ENCODE measurements at regions of chr16 and their contacts with region 1.

Region 1: DNA sequence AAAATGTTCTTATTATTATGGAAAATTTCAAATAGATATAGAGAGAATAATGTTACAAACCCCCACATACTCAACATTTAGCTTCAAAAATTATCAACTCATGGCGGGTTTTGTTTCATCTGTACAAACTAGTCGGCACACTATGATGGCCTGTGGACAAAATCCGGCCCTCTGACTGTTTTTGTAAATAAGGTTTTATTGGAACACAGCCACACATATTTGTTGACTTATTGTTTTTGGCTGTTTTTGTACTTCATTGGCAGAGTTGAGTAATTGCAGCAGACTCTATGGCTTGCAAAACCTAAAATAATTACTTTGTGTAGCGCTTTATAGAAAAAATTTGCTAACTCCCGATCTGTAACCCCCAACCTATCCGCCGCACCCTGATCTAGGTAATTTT is 41.4 kb upstream of the CLEC18A start:
- DNase-seq: no peak
- H3K4me3 ChIP-seq: no peak overlapping the region
- H3K27ac ChIP-seq: no peak overlapping the region
- H3K4me1 ChIP-seq: peaks cover 3% of the 10 kb centered on the region
- H3K27me3 ChIP-seq: no peaks in the 10 kb centered on the region
- CTCF ChIP-seq: no peak

Region 2: DNA sequence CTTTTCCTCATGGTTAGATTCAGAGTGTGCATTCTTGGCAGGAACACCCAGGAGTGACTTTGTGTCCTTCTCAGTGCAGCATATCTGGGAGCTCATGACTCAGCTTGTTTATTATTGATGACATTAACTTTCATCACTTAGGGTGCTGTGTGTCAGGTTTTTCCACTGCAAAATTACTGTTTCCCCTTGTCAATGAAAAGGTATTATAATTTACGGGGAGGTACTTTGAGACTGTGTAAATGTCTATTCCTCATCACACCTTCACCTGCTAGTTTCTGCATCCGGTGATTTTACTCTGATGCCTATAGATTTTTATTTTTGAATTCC is 97.1 kb before region 1 on chr16:
- CTCF ChIA-PET with region 1: no interaction called
- dilution Hi-C with region 1: no loop called
- in situ Hi-C with region 1: no loop called
- intact Hi-C with region 1: no loop called
- DNase-seq: no peak
- H3K4me3 ChIP-seq: no peak overlapping the region
- H3K27ac ChIP-seq: no peak overlapping the region
- H3K4me1 ChIP-seq: no peaks in the 10 kb centered on the region
- H3K27me3 ChIP-seq: no peaks in the 10 kb centered on the region
- CTCF ChIP-seq: no peak

Region 3: GRCh38 chr16:69833357-69834282 is 76.1 kb before region 1 on chr16:
- CTCF ChIA-PET with region 1: no interaction called
- dilution Hi-C with region 1: loop called (anchors 5 kb)
- in situ Hi-C with region 1: no loop called
- intact Hi-C with region 1: no loop called
- DNase-seq: no peak
- H3K4me3 ChIP-seq: no peak overlapping the region
- H3K27ac ChIP-seq: no peak overlapping the region
- H3K4me1 ChIP-seq: no peaks in the 10 kb centered on the region
- H3K27me3 ChIP-seq: no peaks in the 10 kb centered on the region
- CTCF ChIP-seq: no peak

Region 4: GRCh38 chr16:69865701-69866100 is 44.1 kb before region 1 on chr16:
- CTCF ChIA-PET with region 1: no interaction called
- dilution Hi-C with region 1: loop called (anchors 5 kb)
- in situ Hi-C with region 1: no loop called
- intact Hi-C with region 1: no loop called
- DNase-seq: no peak
- H3K4me3 ChIP-seq: no peak overlapping the region
- H3K27ac ChIP-seq: no peak overlapping the region
- H3K4me1 ChIP-seq: peaks cover 4% of the 10 kb centered on the region
- H3K27me3 ChIP-seq: no peaks in the 10 kb centered on the region
- CTCF ChIP-seq: no peak

Region 5: DNA sequence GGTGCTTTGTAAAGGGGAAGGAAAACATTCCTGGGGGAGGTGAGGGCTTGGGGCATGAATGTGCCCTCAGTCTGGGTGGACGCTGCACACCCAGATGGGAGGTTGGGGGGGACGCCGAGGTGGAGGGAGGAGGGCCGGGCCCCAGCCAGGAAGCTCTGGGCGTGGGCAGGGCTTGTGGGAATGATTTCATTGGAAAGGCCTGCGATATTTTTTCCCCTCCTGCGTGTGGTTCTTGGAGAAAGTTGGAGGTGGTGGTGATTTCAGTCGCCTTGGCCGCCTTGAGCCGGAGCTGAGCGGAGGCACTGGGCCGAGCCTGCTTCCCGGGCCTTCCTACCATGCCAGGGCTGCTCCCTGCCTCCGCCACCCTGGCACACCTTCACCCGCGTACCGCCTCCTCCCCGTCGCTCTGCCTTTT is 15.0 kb after region 1 on chr16:
- CTCF ChIA-PET with region 1: no interaction called
- dilution Hi-C with region 1: no loop called
- in situ Hi-C with region 1: no loop called
- intact Hi-C with region 1: no loop called
- DNase-seq: peak; percentile 74
- H3K4me3 ChIP-seq: peak overlapping the region in 2 of 3 experiments; percentile 1 to 28
- H3K27ac ChIP-seq: peak overlapping the region; percentile 52
- H3K4me1 ChIP-seq: peaks cover 16% of the 10 kb centered on the region
- H3K27me3 ChIP-seq: no peaks in the 10 kb centered on the region
- CTCF ChIP-seq: no peak

Measured in mammary epithelial cell (primary cell).